ENCODE measurements at regions of chr15 and their contacts with region 1.

Region 1: GRCh38 chr15:69713726-69714559 is 261.3 kb downstream of the RPLP1 start:
- DNase-seq: no peak
- H3K4me3 ChIP-seq: no peak overlapping the region
- H3K27ac ChIP-seq: no peak overlapping the region
- H3K4me1 ChIP-seq: no peaks in the 10 kb centered on the region
- H3K27me3 ChIP-seq: no peaks in the 10 kb centered on the region
- CTCF ChIP-seq: no peak
- POLR2A ChIP-seq: no peak

Region 2: GRCh38 chr15:69652751-69653305 is 61.1 kb before region 1 on chr15:
- intact Hi-C with region 1: loop called (anchors 10 kb)
- DNase-seq: peak in 1 of 2 donors; percentile 20
- H3K4me3 ChIP-seq: no peak overlapping the region
- H3K27ac ChIP-seq: no peak overlapping the region
- H3K4me1 ChIP-seq: no peaks in the 10 kb centered on the region
- H3K27me3 ChIP-seq: no peaks in the 10 kb centered on the region
- CTCF ChIP-seq: no peak
- POLR2A ChIP-seq: no peak